Activated CD8-positive, alpha-beta T cell treated with anti-CD3 and anti-CD28 coated beads for 36 hours (primary cell): ENCODE measurements at regions of chr18 and their contacts with region 1.

Region 1: DNA sequence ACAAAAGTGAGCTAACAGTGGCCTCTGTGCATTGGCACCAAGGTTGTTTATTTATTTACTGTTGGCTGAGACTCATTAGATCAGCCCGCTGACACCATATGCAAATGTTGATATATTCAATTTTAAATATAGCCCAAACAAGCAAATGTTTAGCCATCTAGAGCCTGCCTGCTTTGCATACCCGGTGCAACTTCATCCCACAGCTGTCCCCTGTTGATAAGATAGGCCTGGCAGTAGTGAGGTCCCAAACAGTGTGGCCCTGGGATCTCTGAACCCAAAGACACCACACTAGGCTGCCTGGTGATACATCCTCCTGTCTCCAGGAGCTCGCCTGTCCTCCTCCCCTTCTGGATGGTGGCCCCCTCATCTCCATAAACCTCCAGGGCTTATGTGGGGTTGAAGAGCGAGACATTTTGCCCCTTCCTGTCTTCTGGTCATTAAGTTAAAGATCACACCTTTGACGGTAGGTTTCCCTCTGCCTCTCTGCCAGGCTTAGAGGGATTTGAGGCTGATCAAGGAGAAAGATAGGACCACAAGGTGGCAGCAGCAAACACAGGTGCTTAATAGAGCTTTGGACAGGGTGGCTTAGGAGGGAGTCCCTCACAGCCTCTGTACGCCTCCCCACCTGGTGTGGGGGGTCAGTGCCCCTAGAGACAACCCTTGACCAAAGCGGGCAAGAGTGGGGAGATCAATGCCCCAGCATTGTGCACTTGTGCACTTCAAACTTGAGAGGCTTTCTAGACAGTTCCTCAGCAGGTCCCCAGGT is 23.7 kb upstream of the MYO5B start:
- DNase-seq: peak; percentile 58
- ATAC-seq: peak; percentile 60
- H3K4me3 Mint-ChIP-seq: no peak overlapping the region
- H3K27ac Mint-ChIP-seq: no peak overlapping the region
- H3K4me1 Mint-ChIP-seq: no peaks in the 10 kb centered on the region
- H3K27me3 Mint-ChIP-seq: peaks cover 21% of the 10 kb centered on the region
- CTCF ChIP-seq: peak; percentile 46

Region 2: GRCh38 chr18:50044402-50044801 is 174.2 kb before region 1 on chr18:
- CTCF ChIA-PET with region 1: no interaction called
- POLR2A ChIA-PET with region 1: no interaction called
- intact Hi-C with region 1: no loop called
- DNase-seq: no peak
- ATAC-seq: no peak
- H3K4me3 Mint-ChIP-seq: no peak overlapping the region
- H3K27ac Mint-ChIP-seq: no peak overlapping the region
- H3K4me1 Mint-ChIP-seq: no peaks in the 10 kb centered on the region
- H3K27me3 Mint-ChIP-seq: peaks cover 13% of the 10 kb centered on the region
- CTCF ChIP-seq: no peak

Region 3: GRCh38 chr18:50203801-50204604 is 14.6 kb before region 1 on chr18:
- CTCF ChIA-PET with region 1: interaction called, 16 read pairs
- POLR2A ChIA-PET with region 1: no interaction called
- intact Hi-C with region 1: no loop called
- DNase-seq: peak; percentile 31
- ATAC-seq: no peak
- H3K4me3 Mint-ChIP-seq: no peak overlapping the region
- H3K27ac Mint-ChIP-seq: no peak overlapping the region
- H3K4me1 Mint-ChIP-seq: peaks cover 9% of the 10 kb centered on the region
- H3K27me3 Mint-ChIP-seq: peaks cover 50% of the 10 kb centered on the region
- CTCF ChIP-seq: peak; percentile 55